ENCODE measurements at regions of chr15 and their contacts with region 1.

Region 1: GRCh38 chr15:60840306-60840702 is 361.4 kb upstream of the ICE2 start:
- DNase-seq: no peak
- H3K4me3 Mint-ChIP-seq: peak overlapping the region; percentile 49
- H3K27ac Mint-ChIP-seq: peak overlapping the region; percentile 37
- H3K4me1 Mint-ChIP-seq: peaks cover 66% of the 10 kb centered on the region
- H3K27me3 Mint-ChIP-seq: peaks cover 17% of the 10 kb centered on the region

Region 2: GRCh38 chr15:60854858-60855564 is 14.7 kb after region 1 on chr15:
- intact Hi-C with region 1: loop called (anchors 1 kb)
- DNase-seq: no peak
- H3K4me3 Mint-ChIP-seq: no peak overlapping the region
- H3K27ac Mint-ChIP-seq: no peak overlapping the region
- H3K4me1 Mint-ChIP-seq: peaks cover 58% of the 10 kb centered on the region
- H3K27me3 Mint-ChIP-seq: peaks cover 4% of the 10 kb centered on the region

Region 3: GRCh38 chr15:60916679-60917460 is 76.6 kb after region 1 on chr15:
- intact Hi-C with region 1: loop called (anchors 1 kb)
- DNase-seq: peak; percentile 80
- H3K4me3 Mint-ChIP-seq: peak overlapping the region; percentile 17
- H3K27ac Mint-ChIP-seq: peak overlapping the region; percentile 64
- H3K4me1 Mint-ChIP-seq: peaks cover 32% of the 10 kb centered on the region
- H3K27me3 Mint-ChIP-seq: peaks cover 2% of the 10 kb centered on the region